ENCODE measurements at regions of chr7 and their contacts with region 1.

Region 1: DNA sequence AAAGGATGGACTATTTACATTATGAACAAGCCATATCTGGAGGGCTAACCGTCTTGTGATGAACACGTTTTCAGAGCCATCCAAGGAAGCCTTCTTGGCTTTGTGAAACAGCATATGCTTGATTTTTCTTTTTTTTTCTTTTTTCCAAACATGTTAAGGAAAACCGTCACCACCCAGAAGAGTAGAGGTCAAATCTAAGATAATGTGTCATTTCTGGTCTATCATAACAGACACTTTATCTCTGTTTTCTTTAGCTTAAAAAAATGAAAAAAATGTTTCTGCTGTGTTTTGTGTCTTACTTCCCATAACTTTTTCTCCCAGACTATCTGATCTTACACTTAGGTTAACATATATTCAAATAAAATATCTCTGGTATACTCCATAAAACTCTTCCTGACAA is 76.1 kb upstream of the DGKB start:
- DNase-seq: no peak
- H3K4me3 ChIP-seq: no peak overlapping the region
- H3K27ac ChIP-seq: no peak overlapping the region
- H3K4me1 ChIP-seq: no peaks in the 10 kb centered on the region
- H3K27me3 ChIP-seq: no peaks in the 10 kb centered on the region
- CTCF ChIP-seq: no peak

Region 2: GRCh38 chr7:14962778-14963177 is 15.9 kb before region 1 on chr7:
- CTCF ChIA-PET with region 1: interaction called, 10 read pairs
- POLR2A ChIA-PET with region 1: no interaction called
- intact Hi-C with region 1: no loop called
- DNase-seq: no peak
- H3K4me3 ChIP-seq: no peak overlapping the region
- H3K27ac ChIP-seq: no peak overlapping the region
- H3K4me1 ChIP-seq: no peaks in the 10 kb centered on the region
- H3K27me3 ChIP-seq: no peaks in the 10 kb centered on the region
- CTCF ChIP-seq: no peak

Measured in PC-9 (cell line).